ENCODE measurements at regions of chr6 and their contacts with region 1.

Region 1: GRCh38 chr6:80106418-80107235 is at the start of gene BCKDHB:
- DNase-seq: peak; percentile 91 to 99 (median 98)
- ATAC-seq: peak; percentile 99
- H3K4me3 ChIP-seq: peak within 1 kb of the TSS; percentile 77
- H3K4me3 Mint-ChIP-seq: peak within 1 kb of the TSS; percentile 86 to 98 (median 94)
- H3K27ac ChIP-seq: peak within 1 kb of the TSS; percentile 75
- H3K27ac Mint-ChIP-seq: peak within 1 kb of the TSS; percentile 78 to 94 (median 91)
- H3K4me1 ChIP-seq: peaks cover 0 to 6% of the 10 kb centered on the region in 2 donors
- H3K4me1 Mint-ChIP-seq: peaks cover 17 to 34% (median 24%) of the 10 kb centered on the region in 7 donors
- H3K27me3 ChIP-seq: no peaks in the 10 kb centered on the region
- H3K27me3 Mint-ChIP-seq: peaks cover 5 to 16% (median 11%) of the 10 kb centered on the region in 5 donors
- total RNA-seq, gene BCKDHB: 13.8 to 22.1 (median 17.4) TPM

Region 2: DNA sequence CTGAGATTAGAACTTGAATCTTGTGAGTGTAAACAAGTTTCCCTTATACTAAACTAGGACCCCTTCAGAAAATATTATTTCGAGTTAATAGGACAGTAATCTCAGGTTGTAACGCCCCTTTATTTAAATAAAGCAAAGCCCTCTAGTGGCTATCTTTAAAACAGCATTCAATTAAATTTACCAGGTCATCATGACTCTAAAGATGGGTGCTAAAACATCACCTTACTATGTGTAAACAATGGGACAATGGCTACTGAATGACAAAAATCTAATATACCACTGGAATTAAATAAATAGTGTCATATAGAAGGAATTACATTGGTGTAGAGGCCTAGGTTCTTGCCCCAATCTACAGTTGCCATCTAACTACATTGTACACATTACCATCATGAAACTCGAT is 1494.7 kb before region 1 on chr6:
- CTCF ChIA-PET with region 1: no interaction called
- POLR2A ChIA-PET with region 1: no interaction called
- intact Hi-C with region 1: no loop called
- DNase-seq: no peak
- ATAC-seq: no peak
- H3K4me3 ChIP-seq: no peak overlapping the region
- H3K4me3 Mint-ChIP-seq: no peak overlapping the region
- H3K27ac ChIP-seq: no peak overlapping the region
- H3K27ac Mint-ChIP-seq: no peak overlapping the region
- H3K4me1 ChIP-seq: no peaks in the 10 kb centered on the region
- H3K4me1 Mint-ChIP-seq: no peaks in the 10 kb centered on the region
- H3K27me3 ChIP-seq: no peaks in the 10 kb centered on the region
- H3K27me3 Mint-ChIP-seq: peaks cover 0 to 11% (median 6%) of the 10 kb centered on the region in 5 donors

Region 3: GRCh38 chr6:78867370-78868040 is 1239.1 kb before region 1 on chr6 and contains the start of gene IRAK1BP1:
- CTCF ChIA-PET with region 1: no interaction called
- POLR2A ChIA-PET with region 1: no interaction called
- intact Hi-C with region 1: loop called in 1 of 2 experiments (anchors 1 kb)
- DNase-seq: peak; percentile 39 to 79 (median 76)
- ATAC-seq: peak; percentile 94
- H3K4me3 ChIP-seq: peak within 1 kb of the TSS; percentile 85
- H3K4me3 Mint-ChIP-seq: peak within 1 kb of the TSS; percentile 91 to 100 (median 98)
- H3K27ac ChIP-seq: peak within 1 kb of the TSS; percentile 68
- H3K27ac Mint-ChIP-seq: peak within 1 kb of the TSS; percentile 87 to 97 (median 96)
- H3K4me1 ChIP-seq: peaks cover 0 to 5% of the 10 kb centered on the region in 2 donors
- H3K4me1 Mint-ChIP-seq: peaks cover 6 to 33% (median 27%) of the 10 kb centered on the region in 7 donors
- H3K27me3 ChIP-seq: no peaks in the 10 kb centered on the region
- H3K27me3 Mint-ChIP-seq: no peaks in the 10 kb centered on the region
- total RNA-seq, gene IRAK1BP1: 0.71 to 3.6 (median 3.1) TPM

Region 4: GRCh38 chr6:79233611-79234149 is 872.9 kb before region 1 on chr6:
- CTCF ChIA-PET with region 1: no interaction called
- POLR2A ChIA-PET with region 1: no interaction called
- intact Hi-C with region 1: loop called (anchors 1 kb)
- DNase-seq: peak; percentile 34 to 77 (median 54)
- ATAC-seq: peak; percentile 63
- H3K4me3 ChIP-seq: peak overlapping the region; percentile 89
- H3K4me3 Mint-ChIP-seq: peak overlapping the region; percentile 92 to 100 (median 98)
- H3K27ac ChIP-seq: peak overlapping the region; percentile 62
- H3K27ac Mint-ChIP-seq: peak overlapping the region; percentile 64 to 96 (median 90)
- H3K4me1 ChIP-seq: peaks cover 4 to 8% of the 10 kb centered on the region in 2 donors
- H3K4me1 Mint-ChIP-seq: peaks cover 9 to 42% (median 30%) of the 10 kb centered on the region in 7 donors
- H3K27me3 ChIP-seq: no peaks in the 10 kb centered on the region
- H3K27me3 Mint-ChIP-seq: no peaks in the 10 kb centered on the region

Region 5: DNA sequence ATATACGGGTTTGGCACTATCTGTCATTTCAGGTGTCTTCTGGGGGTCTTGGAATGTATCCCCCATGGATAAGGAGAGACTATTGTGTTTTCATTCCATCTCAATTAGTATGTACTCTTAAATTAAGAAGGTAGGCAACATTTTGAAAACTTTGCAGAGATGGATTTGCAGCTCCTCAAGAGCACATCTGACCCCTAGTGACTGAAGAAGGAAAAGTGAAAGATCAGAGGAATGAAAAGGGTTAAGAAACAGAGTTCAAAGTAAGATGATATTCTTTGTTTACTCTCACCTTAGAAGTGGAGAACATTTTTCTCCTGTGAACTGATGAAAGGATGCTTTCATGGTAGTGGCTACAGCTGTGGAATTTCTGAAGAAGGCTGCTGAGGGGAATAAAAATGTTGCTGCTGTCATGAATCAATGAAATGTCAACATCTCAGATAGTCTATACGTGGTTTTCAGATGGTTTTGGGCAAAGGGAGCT is 434.0 kb before region 1 on chr6:
- CTCF ChIA-PET with region 1: no interaction called
- POLR2A ChIA-PET with region 1: no interaction called
- intact Hi-C with region 1: loop called in 1 of 2 experiments (anchors 2 kb)
- DNase-seq: peak in 5 of 9 donors; percentile 8 to 54 (median 45)
- ATAC-seq: peak; percentile 47
- H3K4me3 ChIP-seq: no peak overlapping the region
- H3K4me3 Mint-ChIP-seq: peak overlapping the region in 2 of 10 donors; percentile 60 to 65
- H3K27ac ChIP-seq: no peak overlapping the region
- H3K27ac Mint-ChIP-seq: peak overlapping the region in 7 of 9 donors; percentile 10 to 83 (median 56)
- H3K4me1 ChIP-seq: peaks cover 0 to 31% of the 10 kb centered on the region in 2 donors
- H3K4me1 Mint-ChIP-seq: peaks cover 16 to 53% (median 43%) of the 10 kb centered on the region in 7 donors
- H3K27me3 ChIP-seq: no peaks in the 10 kb centered on the region
- H3K27me3 Mint-ChIP-seq: no peaks in the 10 kb centered on the region

Region 6: DNA sequence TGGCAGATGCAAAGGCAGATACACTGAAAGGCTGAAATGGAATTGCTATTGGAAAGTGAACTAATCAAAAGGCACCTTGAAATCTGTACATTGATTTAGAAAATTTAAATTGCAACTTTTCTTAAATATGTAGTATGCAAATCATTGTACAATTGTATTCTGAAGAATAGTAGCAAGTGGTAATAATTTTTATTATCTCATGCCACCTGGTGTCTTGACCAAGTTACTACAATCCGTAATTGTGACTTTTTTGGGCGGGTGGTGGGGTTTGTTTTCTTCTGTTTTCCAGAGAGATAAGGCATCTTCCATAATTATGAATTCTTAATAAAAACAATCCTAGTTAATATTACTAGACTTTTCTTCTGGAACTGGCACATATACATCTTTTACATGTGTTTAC is 12.6 kb before region 1 on chr6:
- CTCF ChIA-PET with region 1: interaction called, 4 read pairs
- POLR2A ChIA-PET with region 1: interaction called, 5 read pairs
- intact Hi-C with region 1: loop called (anchors 1 kb)
- DNase-seq: peak in 5 of 9 donors; percentile 31 to 36 (median 31)
- ATAC-seq: peak; percentile 67
- H3K4me3 ChIP-seq: no peak overlapping the region
- H3K4me3 Mint-ChIP-seq: no peak overlapping the region
- H3K27ac ChIP-seq: no peak overlapping the region
- H3K27ac Mint-ChIP-seq: no peak overlapping the region
- H3K4me1 ChIP-seq: no peaks in the 10 kb centered on the region
- H3K4me1 Mint-ChIP-seq: peaks cover 0 to 8% (median 7%) of the 10 kb centered on the region in 7 donors
- H3K27me3 ChIP-seq: no peaks in the 10 kb centered on the region
- H3K27me3 Mint-ChIP-seq: peaks cover 7 to 28% (median 12%) of the 10 kb centered on the region in 5 donors

Region 7: DNA sequence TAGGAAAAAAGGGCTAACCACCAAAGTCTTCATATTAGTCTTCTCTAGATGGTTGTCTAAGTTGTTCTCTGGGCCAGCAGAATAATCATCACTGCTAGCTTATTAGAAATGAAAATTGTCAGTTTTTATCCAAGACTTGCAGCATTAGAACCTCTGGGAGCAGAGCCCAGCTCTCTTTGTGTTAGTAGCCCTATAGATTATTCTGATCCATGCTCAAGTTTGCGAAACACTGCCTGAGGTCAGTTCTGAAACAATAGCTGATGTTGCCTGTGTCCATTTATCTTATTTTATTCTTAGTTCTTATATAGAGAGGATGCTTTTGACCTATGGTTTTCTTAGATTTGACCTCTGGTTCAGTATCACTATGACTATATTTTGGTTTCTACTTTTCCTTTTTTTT is 66.8 kb after region 1 on chr6:
- CTCF ChIA-PET with region 1: no interaction called
- POLR2A ChIA-PET with region 1: no interaction called
- intact Hi-C with region 1: no loop called
- DNase-seq: no peak
- ATAC-seq: no peak
- H3K4me3 ChIP-seq: no peak overlapping the region
- H3K4me3 Mint-ChIP-seq: no peak overlapping the region
- H3K27ac ChIP-seq: no peak overlapping the region
- H3K27ac Mint-ChIP-seq: no peak overlapping the region
- H3K4me1 ChIP-seq: no peaks in the 10 kb centered on the region
- H3K4me1 Mint-ChIP-seq: peaks cover 0 to 3% (median 0%) of the 10 kb centered on the region in 7 donors
- H3K27me3 ChIP-seq: no peaks in the 10 kb centered on the region
- H3K27me3 Mint-ChIP-seq: no peaks in the 10 kb centered on the region

Region 8: GRCh38 chr6:80214436-80215022 is 107.9 kb after region 1 on chr6:
- CTCF ChIA-PET with region 1: no interaction called
- POLR2A ChIA-PET with region 1: no interaction called
- intact Hi-C with region 1: loop called in 1 of 2 experiments (anchors 5 kb)
- DNase-seq: peak in 5 of 9 donors; percentile 0 to 29 (median 8)
- ATAC-seq: peak; percentile 81
- H3K4me3 ChIP-seq: no peak overlapping the region
- H3K4me3 Mint-ChIP-seq: no peak overlapping the region
- H3K27ac ChIP-seq: no peak overlapping the region
- H3K27ac Mint-ChIP-seq: no peak overlapping the region
- H3K4me1 ChIP-seq: no peaks in the 10 kb centered on the region
- H3K4me1 Mint-ChIP-seq: peaks cover 0 to 5% (median 0%) of the 10 kb centered on the region in 7 donors
- H3K27me3 ChIP-seq: no peaks in the 10 kb centered on the region
- H3K27me3 Mint-ChIP-seq: no peaks in the 10 kb centered on the region